ENCODE measurements at regions of chr12 and their contacts with region 1.

Region 1: DNA sequence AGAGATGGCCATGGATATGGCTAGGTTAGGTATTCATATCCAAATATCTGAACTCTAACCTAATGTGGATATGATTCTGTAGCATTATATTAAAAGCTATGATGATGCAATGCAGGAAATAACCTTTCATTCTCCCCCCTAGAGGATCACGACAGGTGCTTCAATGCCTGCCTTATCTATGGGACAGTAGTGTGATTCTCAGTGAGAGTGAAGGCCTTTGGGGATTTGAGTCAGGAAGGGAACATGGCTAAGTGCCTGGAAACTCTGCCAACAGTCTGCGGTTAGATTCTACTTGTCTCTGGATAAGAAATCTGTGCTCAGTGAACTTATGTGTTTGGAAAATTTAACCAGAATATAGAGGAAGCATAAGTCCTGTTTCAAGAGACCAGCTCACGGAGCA is 81.8 kb downstream of the SLC38A1 start:
- DNase-seq: no peak
- ATAC-seq: peak; percentile 67
- H3K4me3 Mint-ChIP-seq: no peak overlapping the region
- H3K27ac Mint-ChIP-seq: peak overlapping the region; percentile 87
- H3K4me1 Mint-ChIP-seq: peaks cover 90% of the 10 kb centered on the region
- H3K27me3 Mint-ChIP-seq: no peaks in the 10 kb centered on the region
- CTCF ChIP-seq: no peak

Region 2: GRCh38 chr12:46198913-46199312 is 11.9 kb after region 1 on chr12:
- CTCF ChIA-PET with region 1: no interaction called
- POLR2A ChIA-PET with region 1: interaction called, 10 read pairs
- intact Hi-C with region 1: no loop called
- DNase-seq: no peak
- ATAC-seq: no peak
- H3K4me3 Mint-ChIP-seq: no peak overlapping the region
- H3K27ac Mint-ChIP-seq: no peak overlapping the region
- H3K4me1 Mint-ChIP-seq: peaks cover 7% of the 10 kb centered on the region
- H3K27me3 Mint-ChIP-seq: no peaks in the 10 kb centered on the region
- CTCF ChIP-seq: no peak